Activated B cell treated with CpG ODN at 0.5 μM for 24 hours (primary cell): ENCODE measurements at regions of chrX and their contacts with region 1.

Region 1: GRCh38 chrX:136767104-136767941 is 13.4 kb downstream of the ARHGEF6 start:
- DNase-seq: peak; percentile 46
- ATAC-seq: peak; percentile 80
- H3K4me3 Mint-ChIP-seq: peak overlapping the region; percentile 78
- H3K27ac Mint-ChIP-seq: peak overlapping the region; percentile 87
- H3K4me1 Mint-ChIP-seq: peaks cover 49% of the 10 kb centered on the region
- H3K27me3 Mint-ChIP-seq: no peaks in the 10 kb centered on the region
- CTCF ChIP-seq: no peak

Region 2: GRCh38 chrX:136731207-136731782 is 36.0 kb before region 1 on chrX:
- CTCF ChIA-PET with region 1: no interaction called
- POLR2A ChIA-PET with region 1: interaction called, 4 read pairs
- intact Hi-C with region 1: loop called (anchors 5 kb)
- DNase-seq: no peak
- ATAC-seq: no peak
- H3K4me3 Mint-ChIP-seq: no peak overlapping the region
- H3K27ac Mint-ChIP-seq: no peak overlapping the region
- H3K4me1 Mint-ChIP-seq: peaks cover 32% of the 10 kb centered on the region
- H3K27me3 Mint-ChIP-seq: no peaks in the 10 kb centered on the region
- CTCF ChIP-seq: no peak

Region 3: GRCh38 chrX:136747003-136747986 is 20.0 kb before region 1 on chrX:
- CTCF ChIA-PET with region 1: interaction called, 5 read pairs
- POLR2A ChIA-PET with region 1: interaction called, 31 read pairs
- intact Hi-C with region 1: loop called (anchors 2 kb)
- DNase-seq: no peak
- ATAC-seq: peak; percentile 81
- H3K4me3 Mint-ChIP-seq: peak overlapping the region; percentile 69
- H3K27ac Mint-ChIP-seq: peak overlapping the region; percentile 95
- H3K4me1 Mint-ChIP-seq: peaks cover 79% of the 10 kb centered on the region
- H3K27me3 Mint-ChIP-seq: no peaks in the 10 kb centered on the region
- CTCF ChIP-seq: no peak

Region 4: GRCh38 chrX:136780763-136781162 is 13.4 kb after region 1 on chrX and contains the start of gene ARHGEF6:
- CTCF ChIA-PET with region 1: no interaction called
- POLR2A ChIA-PET with region 1: interaction called, 53 read pairs
- intact Hi-C with region 1: loop called (anchors 1 kb)
- DNase-seq: no peak
- ATAC-seq: no peak
- H3K4me3 Mint-ChIP-seq: peak within 1 kb of the TSS; percentile 90
- H3K27ac Mint-ChIP-seq: peak within 1 kb of the TSS; percentile 92
- H3K4me1 Mint-ChIP-seq: peaks cover 54% of the 10 kb centered on the region
- H3K27me3 Mint-ChIP-seq: no peaks in the 10 kb centered on the region
- CTCF ChIP-seq: no peak
- total RNA-seq, gene ARHGEF6: 32.4 and 33.0 TPM in 2 replicates

Region 5: DNA sequence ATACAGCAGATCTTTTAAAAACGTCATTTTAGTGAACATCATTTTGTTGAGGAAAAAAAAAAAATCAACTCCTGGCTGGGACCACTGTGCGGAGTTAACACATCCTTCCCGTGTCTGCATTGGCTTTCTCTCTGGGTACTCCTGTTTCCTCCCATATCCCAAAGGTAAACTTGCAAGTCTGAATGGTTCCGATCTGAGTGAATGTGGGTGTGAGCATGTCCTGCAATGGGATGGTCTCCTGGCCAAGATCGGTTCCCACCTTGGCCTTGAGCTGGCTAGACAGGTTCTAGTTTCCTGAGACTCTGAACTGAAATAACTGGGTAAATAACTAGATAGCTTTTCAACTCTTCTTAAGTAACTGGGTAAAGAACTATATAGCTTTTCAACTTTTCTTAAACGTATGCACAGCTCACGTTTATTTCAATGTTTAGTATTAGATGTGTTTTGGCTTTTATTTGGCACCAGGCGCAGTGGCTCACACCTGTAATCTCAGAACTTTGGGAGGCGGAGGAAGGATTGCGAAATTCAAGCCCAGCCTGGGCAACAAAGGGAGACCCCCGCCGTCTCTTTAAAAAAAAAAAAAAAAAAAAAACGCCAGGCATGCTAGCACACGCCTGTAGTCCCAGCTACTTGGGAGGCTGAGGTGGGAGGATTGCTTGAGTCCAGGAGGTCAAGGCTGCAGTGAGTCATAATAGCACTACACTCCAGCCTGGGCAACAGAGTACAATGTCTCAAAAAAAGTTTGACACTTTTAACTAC is 99.2 kb after region 1 on chrX:
- CTCF ChIA-PET with region 1: no interaction called
- POLR2A ChIA-PET with region 1: interaction called, 12 read pairs
- intact Hi-C with region 1: no loop called
- DNase-seq: no peak
- ATAC-seq: no peak
- H3K4me3 Mint-ChIP-seq: no peak overlapping the region
- H3K27ac Mint-ChIP-seq: peak overlapping the region; percentile 24
- H3K4me1 Mint-ChIP-seq: peaks cover 21% of the 10 kb centered on the region
- H3K27me3 Mint-ChIP-seq: no peaks in the 10 kb centered on the region
- CTCF ChIP-seq: no peak

Region 6: DNA sequence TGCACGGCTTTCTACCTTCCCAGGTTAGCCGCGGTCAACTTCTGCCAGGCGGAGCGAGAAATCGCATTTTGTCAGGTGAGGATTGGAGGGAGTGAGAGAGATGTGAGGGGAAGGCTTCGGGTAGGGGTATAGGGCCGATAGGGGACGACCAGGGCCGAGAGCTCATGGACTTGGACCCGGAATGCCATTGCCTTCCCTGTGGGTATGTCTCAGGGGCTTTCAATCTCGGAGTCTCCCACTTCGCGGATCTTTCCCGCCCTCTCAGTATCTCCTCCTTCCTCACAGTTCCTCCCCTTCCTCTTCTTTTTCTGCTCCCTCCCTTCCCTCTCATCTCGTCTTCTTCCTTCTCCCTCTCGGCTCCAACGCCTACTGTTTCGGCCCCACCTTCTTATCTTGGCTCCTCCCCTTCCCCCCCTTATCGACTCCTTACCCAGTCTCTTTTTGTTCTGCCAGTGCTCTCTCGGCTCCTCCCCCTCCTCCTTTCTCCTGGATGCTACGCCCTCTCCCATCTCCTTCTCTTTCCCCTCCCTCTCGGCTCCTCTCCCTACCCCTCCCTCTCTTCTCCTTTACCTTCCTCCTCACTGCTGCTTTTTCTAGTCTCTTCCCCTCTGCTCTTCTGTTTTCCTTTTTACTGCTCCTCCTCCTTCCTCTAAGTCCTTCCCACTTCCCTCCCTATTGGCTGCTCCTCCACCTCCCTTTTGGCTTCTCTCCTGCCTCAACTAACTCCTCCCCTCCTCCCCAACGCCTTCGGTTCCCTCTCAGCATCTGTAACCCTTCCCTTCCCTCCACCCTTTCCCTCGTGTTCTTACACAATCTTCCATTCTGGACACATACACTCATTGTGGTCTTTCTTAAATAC is 142.6 kb after region 1 on chrX:
- CTCF ChIA-PET with region 1: no interaction called
- POLR2A ChIA-PET with region 1: interaction called, 4 read pairs
- intact Hi-C with region 1: loop called (anchors 5 kb)
- DNase-seq: peak; percentile 32
- ATAC-seq: peak; percentile 74
- H3K4me3 Mint-ChIP-seq: peak overlapping the region; percentile 95
- H3K27ac Mint-ChIP-seq: peak overlapping the region; percentile 87
- H3K4me1 Mint-ChIP-seq: peaks cover 6% of the 10 kb centered on the region
- H3K27me3 Mint-ChIP-seq: no peaks in the 10 kb centered on the region
- CTCF ChIP-seq: no peak